Gastrocnemius medialis (tissue), 4 donors: ENCODE measurements at regions of chr9 and their contacts with region 1.

Region 1: GRCh38 chr9:129383561-129384416 is 205.7 kb upstream of the IER5L start:
- DNase-seq: peak; percentile 57 to 72
- ATAC-seq: peak; percentile 85 to 89
- H3K4me3 ChIP-seq: peak overlapping the region; percentile 63 to 98 (median 71)
- H3K27ac ChIP-seq: peak overlapping the region; percentile 83 to 94 (median 88)
- H3K4me1 ChIP-seq: peaks cover 8 to 17% of the 10 kb centered on the region in 2 donors
- H3K27me3 ChIP-seq: no peaks in the 10 kb centered on the region
- CTCF ChIP-seq: peak in 2 of 5 experiments; percentile 5 to 7
- POLR2A ChIP-seq: peak in 1 of 2 donors; percentile 47

Region 2: GRCh38 chr9:129218272-129218625 is 165.5 kb before region 1 on chr9:
- in situ Hi-C with region 1: no loop called
- intact Hi-C with region 1: loop called (anchors 1 kb)
- DNase-seq: no peak
- ATAC-seq: no peak
- H3K4me3 ChIP-seq: no peak overlapping the region
- H3K27ac ChIP-seq: no peak overlapping the region
- H3K4me1 ChIP-seq: no peaks in the 10 kb centered on the region
- H3K27me3 ChIP-seq: no peaks in the 10 kb centered on the region
- CTCF ChIP-seq: no peak
- POLR2A ChIP-seq: no peak

Region 3: GRCh38 chr9:129408535-129409215 is 24.9 kb after region 1 on chr9:
- in situ Hi-C with region 1: no loop called
- intact Hi-C with region 1: loop called (anchors 2 kb)
- DNase-seq: peak; percentile 72 to 87
- ATAC-seq: peak; percentile 69 to 72
- H3K4me3 ChIP-seq: peak overlapping the region in 2 of 4 donors; percentile 21 to 38
- H3K27ac ChIP-seq: peak overlapping the region; percentile 81 to 85 (median 81)
- H3K4me1 ChIP-seq: peaks cover 0 to 22% of the 10 kb centered on the region in 2 donors
- H3K27me3 ChIP-seq: no peaks in the 10 kb centered on the region
- CTCF ChIP-seq: no peak
- POLR2A ChIP-seq: peak; percentile 60 to 62

Region 4: GRCh38 chr9:129610473-129611301 is 226.9 kb after region 1 on chr9:
- in situ Hi-C with region 1: no loop called
- intact Hi-C with region 1: loop called (anchors 2 kb)
- DNase-seq: peak; percentile 45 to 60
- ATAC-seq: peak; percentile 72 to 80
- H3K4me3 ChIP-seq: peak overlapping the region; percentile 60 to 95 (median 72)
- H3K27ac ChIP-seq: peak overlapping the region; percentile 77 to 86 (median 82)
- H3K4me1 ChIP-seq: peaks cover 13 to 22% of the 10 kb centered on the region in 2 donors
- H3K27me3 ChIP-seq: no peaks in the 10 kb centered on the region
- CTCF ChIP-seq: peak; percentile 65 to 100 (median 99)
- POLR2A ChIP-seq: no peak